CD8-positive, alpha-beta T cell (primary cell): ENCODE measurements at regions of chr18 and their contacts with region 1.

Region 1: DNA sequence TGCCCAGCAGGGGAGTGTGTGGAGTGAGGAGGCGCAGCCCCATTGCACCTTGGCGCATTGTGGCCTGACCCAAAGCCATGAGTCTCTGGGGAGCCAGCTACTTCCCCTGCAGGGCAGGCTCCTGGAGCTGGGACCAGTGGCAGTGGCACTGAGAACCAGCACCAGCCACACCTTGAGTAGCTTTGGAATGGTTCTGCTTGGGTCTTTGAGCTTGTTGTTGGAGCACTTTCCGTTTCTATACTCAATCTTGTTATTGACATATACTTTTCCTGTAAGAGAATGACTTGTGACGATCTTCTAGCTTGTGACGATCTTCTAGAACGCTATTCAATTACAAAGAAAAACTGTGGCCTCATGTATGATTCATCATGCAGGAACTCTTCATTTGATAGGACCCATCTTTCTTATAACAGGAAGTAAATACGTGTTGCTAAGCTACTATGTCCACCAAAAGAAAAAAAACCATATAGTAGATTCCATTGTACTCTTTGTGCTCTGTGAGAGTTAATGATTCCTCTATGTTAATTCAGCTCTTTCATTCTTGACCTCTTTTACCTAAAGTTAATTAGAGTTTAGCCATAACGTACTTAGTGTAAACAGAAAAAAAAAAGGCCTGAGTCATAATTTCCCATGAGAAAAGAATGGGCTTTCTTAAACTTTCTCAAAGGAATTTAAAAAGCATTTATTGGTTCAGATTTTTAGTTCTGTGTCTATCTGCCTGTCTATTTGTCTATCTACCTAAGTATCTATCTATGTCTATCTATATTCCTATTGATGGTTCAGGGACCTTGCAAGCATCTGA is 113.1 kb downstream of the GATA6 start:
- DNase-seq: peak in 7 of 9 experiments; percentile 10 to 91 (median 35)
- ATAC-seq: peak; percentile 86
- H3K4me3 ChIP-seq: no peak overlapping the region
- H3K4me3 Mint-ChIP-seq: no peak overlapping the region
- H3K27ac ChIP-seq: peak overlapping the region; percentile 49 to 81
- H3K27ac Mint-ChIP-seq: peak overlapping the region; percentile 85
- H3K4me1 ChIP-seq: peaks cover 9% of the 10 kb centered on the region
- H3K4me1 Mint-ChIP-seq: peaks cover 18% of the 10 kb centered on the region
- H3K27me3 ChIP-seq: no peaks in the 10 kb centered on the region
- H3K27me3 Mint-ChIP-seq: no peaks in the 10 kb centered on the region
- CTCF ChIP-seq: no peak

Region 2: GRCh38 chr18:22169007-22169864 is 113.3 kb before region 1 on chr18 and contains the start of gene GATA6:
- CTCF ChIA-PET with region 1: no interaction called
- POLR2A ChIA-PET with region 1: no interaction called
- intact Hi-C with region 1: loop called (anchors 5 kb)
- DNase-seq: peak in 7 of 9 experiments; percentile 15 to 82 (median 63)
- ATAC-seq: peak; percentile 72
- H3K4me3 ChIP-seq: peak within 1 kb of the TSS; percentile 54 to 68
- H3K4me3 Mint-ChIP-seq: peak within 1 kb of the TSS; percentile 90
- H3K27ac ChIP-seq: no peak within 1 kb of the TSS
- H3K27ac Mint-ChIP-seq: no peak within 1 kb of the TSS
- H3K4me1 ChIP-seq: peaks cover 34% of the 10 kb centered on the region
- H3K4me1 Mint-ChIP-seq: peaks cover 29% of the 10 kb centered on the region
- H3K27me3 ChIP-seq: peaks cover 44 to 59% of the 10 kb centered on the region in 2 experiments
- H3K27me3 Mint-ChIP-seq: peaks cover 62% of the 10 kb centered on the region
- CTCF ChIP-seq: peak; percentile 13
- total RNA-seq, gene GATA6: 4.0 to 4.3 TPM

Region 3: DNA sequence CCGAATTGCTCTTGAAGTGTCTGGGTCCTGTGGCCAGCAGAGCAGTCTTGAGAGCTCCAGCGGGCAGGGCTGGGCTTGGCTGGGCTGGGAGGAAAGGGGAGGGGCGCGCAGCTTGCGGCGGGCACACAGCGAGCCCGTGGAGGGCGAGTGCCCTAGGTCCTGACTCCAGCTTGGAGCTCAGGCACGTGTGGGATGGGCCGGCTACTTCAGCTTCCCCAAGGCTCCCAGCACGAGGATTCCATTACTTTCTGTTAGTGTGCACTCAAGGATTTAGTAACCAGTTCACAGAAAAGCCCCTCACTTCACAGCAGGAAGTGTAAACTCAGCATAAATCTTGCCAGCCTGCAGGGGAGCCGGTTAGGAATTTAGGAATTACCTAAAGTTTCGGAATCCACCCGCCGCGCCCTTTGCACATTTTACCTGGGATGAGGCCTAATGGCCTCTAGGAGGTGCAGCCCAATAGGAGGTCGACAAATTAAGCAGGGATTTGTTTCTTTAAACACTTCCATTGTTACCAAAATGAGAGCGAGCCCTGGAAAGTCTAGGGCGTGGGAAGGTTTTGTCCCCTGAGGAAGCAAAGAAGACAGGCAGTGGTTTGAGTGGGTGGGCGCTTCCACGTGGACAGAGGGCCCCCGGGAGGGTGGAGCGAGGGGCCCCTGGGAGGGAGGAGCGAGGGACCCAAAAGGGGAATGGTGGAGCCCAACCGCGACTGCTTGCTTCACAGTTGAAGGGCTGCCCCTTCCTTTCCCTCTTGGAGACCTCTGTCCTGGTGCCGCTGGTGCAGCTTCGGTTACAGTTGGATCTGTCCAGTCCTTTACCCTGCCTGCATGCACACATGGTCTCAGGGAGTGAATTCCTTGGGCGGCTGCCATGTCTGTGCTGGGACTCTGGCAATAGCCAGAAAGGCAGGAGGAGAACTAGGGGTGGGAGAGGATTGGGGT is 41.9 kb after region 1 on chr18:
- CTCF ChIA-PET with region 1: no interaction called
- POLR2A ChIA-PET with region 1: no interaction called
- intact Hi-C with region 1: loop called in 1 of 2 experiments (anchors 1 kb)
- DNase-seq: peak in 3 of 9 experiments; percentile 25 to 37 (median 34)
- ATAC-seq: peak; percentile 49
- H3K4me3 ChIP-seq: peak overlapping the region; percentile 29 to 43
- H3K4me3 Mint-ChIP-seq: peak overlapping the region; percentile 76
- H3K27ac ChIP-seq: peak overlapping the region in 1 of 2 experiments; percentile 5
- H3K27ac Mint-ChIP-seq: peak overlapping the region; percentile 15
- H3K4me1 ChIP-seq: peaks cover 4% of the 10 kb centered on the region
- H3K4me1 Mint-ChIP-seq: peaks cover 3% of the 10 kb centered on the region
- H3K27me3 ChIP-seq: no peaks in the 10 kb centered on the region
- H3K27me3 Mint-ChIP-seq: no peaks in the 10 kb centered on the region
- CTCF ChIP-seq: no peak

Region 4: DNA sequence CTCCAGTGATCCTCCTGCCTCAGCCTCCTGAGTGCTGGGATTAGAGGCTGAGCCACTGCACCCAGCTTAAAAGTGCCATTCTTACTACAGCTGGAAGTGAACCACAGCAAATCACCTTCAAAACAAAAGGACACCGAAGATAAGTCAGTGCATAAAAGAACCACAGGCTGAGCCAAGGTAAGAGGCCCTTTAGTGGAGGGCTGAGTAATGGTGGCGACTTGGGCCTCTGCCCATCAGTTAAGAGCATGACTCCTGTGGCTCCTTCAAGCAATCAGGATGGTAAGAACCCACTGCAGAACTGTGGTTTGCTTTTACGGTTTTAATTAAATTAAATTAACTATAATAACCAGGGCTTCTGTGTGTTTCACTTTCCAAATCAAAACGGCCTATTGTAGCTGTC is 60.1 kb after region 1 on chr18:
- CTCF ChIA-PET with region 1: no interaction called
- POLR2A ChIA-PET with region 1: interaction called, 3 read pairs
- intact Hi-C with region 1: loop called (anchors 1 to 2 kb)
- DNase-seq: peak in 5 of 9 experiments; percentile 40 to 85 (median 67)
- ATAC-seq: peak; percentile 45
- H3K4me3 ChIP-seq: no peak overlapping the region
- H3K4me3 Mint-ChIP-seq: peak overlapping the region; percentile 53
- H3K27ac ChIP-seq: peak overlapping the region; percentile 75 to 88
- H3K27ac Mint-ChIP-seq: peak overlapping the region; percentile 98
- H3K4me1 ChIP-seq: peaks cover 74% of the 10 kb centered on the region
- H3K4me1 Mint-ChIP-seq: peaks cover 84% of the 10 kb centered on the region
- H3K27me3 ChIP-seq: no peaks in the 10 kb centered on the region
- H3K27me3 Mint-ChIP-seq: no peaks in the 10 kb centered on the region
- CTCF ChIP-seq: no peak

Region 5: DNA sequence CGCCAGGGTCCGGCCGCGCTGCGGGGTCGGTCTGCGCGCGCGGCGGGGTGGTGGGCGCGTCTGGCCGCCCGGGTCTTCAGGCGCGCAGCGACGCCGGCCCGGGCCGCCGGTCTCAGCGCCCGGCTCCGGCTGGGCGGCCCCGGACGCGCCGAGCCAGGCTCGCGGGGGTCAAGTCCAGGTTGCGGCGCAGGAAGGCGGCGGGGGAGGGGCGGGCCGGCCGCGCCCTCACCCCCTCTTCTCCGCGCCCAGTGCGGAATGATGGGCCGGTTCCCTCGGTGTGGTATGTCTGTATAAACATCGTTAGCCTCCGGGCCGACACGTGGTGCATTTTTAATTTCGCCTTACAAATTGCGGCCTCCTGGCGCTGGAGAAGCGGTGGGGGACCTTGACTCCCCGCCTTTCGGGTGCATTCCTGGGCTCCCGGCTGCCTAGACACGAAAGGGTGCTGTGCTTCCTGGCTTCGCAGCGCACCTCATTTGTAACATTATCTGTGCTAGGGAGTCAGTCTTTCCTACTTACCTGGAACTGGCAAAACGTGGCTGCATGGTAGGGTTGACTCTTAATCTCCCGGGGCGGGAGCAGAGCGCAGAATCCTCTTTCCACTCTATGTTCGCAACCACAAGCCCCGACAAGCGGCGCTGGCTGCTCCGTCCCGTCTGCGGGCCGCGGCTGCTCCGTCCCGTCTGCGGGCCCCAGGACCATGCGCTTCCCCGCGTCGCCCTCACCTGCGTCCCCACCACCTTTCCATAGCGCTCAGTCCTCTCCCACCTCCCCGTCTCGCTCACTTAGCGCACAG is 66.2 kb after region 1 on chr18:
- CTCF ChIA-PET with region 1: no interaction called
- POLR2A ChIA-PET with region 1: interaction called, 4 read pairs
- intact Hi-C with region 1: loop called (anchors 1 to 2 kb)
- DNase-seq: peak in 4 of 9 experiments; percentile 29 to 69 (median 50)
- ATAC-seq: no peak
- H3K4me3 ChIP-seq: peak overlapping the region; percentile 56 to 71
- H3K4me3 Mint-ChIP-seq: peak overlapping the region; percentile 91
- H3K27ac ChIP-seq: peak overlapping the region; percentile 75 to 88
- H3K27ac Mint-ChIP-seq: peak overlapping the region; percentile 98
- H3K4me1 ChIP-seq: peaks cover 38% of the 10 kb centered on the region
- H3K4me1 Mint-ChIP-seq: peaks cover 49% of the 10 kb centered on the region
- H3K27me3 ChIP-seq: no peaks in the 10 kb centered on the region
- H3K27me3 Mint-ChIP-seq: peaks cover 7% of the 10 kb centered on the region
- CTCF ChIP-seq: no peak

Region 6: GRCh38 chr18:22363867-22364463 is 81.5 kb after region 1 on chr18:
- CTCF ChIA-PET with region 1: no interaction called
- POLR2A ChIA-PET with region 1: no interaction called
- intact Hi-C with region 1: loop called in 1 of 2 experiments (anchors 5 kb)
- DNase-seq: peak in 2 of 9 experiments; percentile 57 to 71
- ATAC-seq: peak; percentile 61
- H3K4me3 ChIP-seq: no peak overlapping the region
- H3K4me3 Mint-ChIP-seq: no peak overlapping the region
- H3K27ac ChIP-seq: no peak overlapping the region
- H3K27ac Mint-ChIP-seq: no peak overlapping the region
- H3K4me1 ChIP-seq: no peaks in the 10 kb centered on the region
- H3K4me1 Mint-ChIP-seq: peaks cover 4% of the 10 kb centered on the region
- H3K27me3 ChIP-seq: no peaks in the 10 kb centered on the region
- H3K27me3 Mint-ChIP-seq: no peaks in the 10 kb centered on the region
- CTCF ChIP-seq: peak; percentile 26

Region 7: DNA sequence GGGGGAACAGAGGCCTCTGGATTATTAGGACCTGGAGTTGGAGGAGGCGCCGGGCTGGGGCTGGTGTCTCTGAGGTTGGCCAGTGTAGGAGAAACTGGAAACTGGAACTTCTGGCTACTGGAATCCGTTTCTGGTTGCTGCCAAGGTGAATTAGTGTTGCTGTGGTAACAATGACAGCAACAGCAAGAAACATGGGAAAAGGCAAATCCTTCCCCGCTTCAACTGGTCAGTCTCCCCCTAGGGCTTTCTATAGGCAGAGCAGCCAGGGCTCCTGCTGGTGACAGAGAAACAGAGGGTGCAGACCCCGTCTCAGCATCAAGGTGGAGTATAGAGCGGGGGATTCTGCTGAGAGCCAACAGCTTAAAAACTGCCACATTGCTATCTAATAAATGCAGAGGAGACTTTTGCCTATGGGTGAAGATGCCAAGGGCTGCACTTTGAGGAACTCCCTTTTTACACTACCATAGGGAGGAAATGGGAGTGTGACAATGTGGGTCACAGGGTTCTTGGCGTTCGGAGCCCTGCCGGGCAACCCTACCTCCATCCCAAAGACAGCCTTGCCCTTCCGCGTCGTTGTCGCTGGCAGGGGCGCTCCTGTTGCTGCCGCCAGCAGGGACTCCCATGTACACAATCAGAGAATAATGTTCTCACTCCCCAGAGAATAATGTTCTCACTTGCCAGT is 771.4 kb after region 1 on chr18:
- CTCF ChIA-PET with region 1: no interaction called
- POLR2A ChIA-PET with region 1: no interaction called
- intact Hi-C with region 1: no loop called
- DNase-seq: no peak
- ATAC-seq: no peak
- H3K4me3 ChIP-seq: no peak overlapping the region
- H3K4me3 Mint-ChIP-seq: no peak overlapping the region
- H3K27ac ChIP-seq: no peak overlapping the region
- H3K27ac Mint-ChIP-seq: no peak overlapping the region
- H3K4me1 ChIP-seq: peaks cover 10% of the 10 kb centered on the region
- H3K4me1 Mint-ChIP-seq: peaks cover 15% of the 10 kb centered on the region
- H3K27me3 ChIP-seq: no peaks in the 10 kb centered on the region
- H3K27me3 Mint-ChIP-seq: no peaks in the 10 kb centered on the region
- CTCF ChIP-seq: no peak